ENCODE measurements at regions of chr18 and their contacts with region 1.

Region 1: GRCh38 chr18:48622911-48623431 is 84.1 kb downstream of the CTIF start:
- DNase-seq: peak; percentile 32
- H3K4me3 ChIP-seq: no peak overlapping the region
- CTCF ChIP-seq: no peak

Region 2: DNA sequence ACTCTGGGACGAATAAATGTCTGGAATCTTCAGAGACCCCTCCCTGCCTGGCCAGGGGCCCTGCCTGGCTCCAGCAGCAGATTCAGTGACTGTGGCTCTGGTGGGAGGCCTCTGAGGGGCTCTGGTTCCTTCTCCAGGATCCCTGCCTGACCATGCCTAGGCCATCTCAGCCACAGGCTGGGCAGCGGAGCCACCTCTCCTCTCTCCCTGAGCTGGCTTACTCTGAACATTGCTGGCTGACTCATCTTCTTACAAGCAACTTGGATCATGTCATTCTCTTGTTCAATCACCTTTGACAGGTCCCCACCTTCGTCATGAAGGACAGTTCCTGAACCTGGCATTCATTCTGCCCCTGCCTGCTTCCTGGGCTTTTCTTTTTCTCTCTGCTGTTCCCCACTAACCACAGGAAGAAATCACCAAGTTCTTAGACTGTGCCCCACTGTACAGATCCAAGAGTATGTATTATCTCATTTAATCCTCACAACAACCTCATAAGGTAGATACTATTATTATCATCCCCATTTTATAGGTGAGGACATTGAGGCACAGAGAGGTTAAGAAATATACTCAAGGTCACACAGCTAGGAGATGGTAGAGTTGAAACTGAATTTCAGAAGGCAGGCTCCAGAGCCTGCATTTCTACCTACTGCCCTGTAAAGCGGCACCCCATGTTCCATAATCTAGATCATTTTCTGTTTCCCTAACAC is 537.0 kb before region 1 on chr18:
- in situ Hi-C with region 1: no loop called
- DNase-seq: no peak
- H3K4me3 ChIP-seq: no peak overlapping the region
- CTCF ChIP-seq: no peak

Region 3: DNA sequence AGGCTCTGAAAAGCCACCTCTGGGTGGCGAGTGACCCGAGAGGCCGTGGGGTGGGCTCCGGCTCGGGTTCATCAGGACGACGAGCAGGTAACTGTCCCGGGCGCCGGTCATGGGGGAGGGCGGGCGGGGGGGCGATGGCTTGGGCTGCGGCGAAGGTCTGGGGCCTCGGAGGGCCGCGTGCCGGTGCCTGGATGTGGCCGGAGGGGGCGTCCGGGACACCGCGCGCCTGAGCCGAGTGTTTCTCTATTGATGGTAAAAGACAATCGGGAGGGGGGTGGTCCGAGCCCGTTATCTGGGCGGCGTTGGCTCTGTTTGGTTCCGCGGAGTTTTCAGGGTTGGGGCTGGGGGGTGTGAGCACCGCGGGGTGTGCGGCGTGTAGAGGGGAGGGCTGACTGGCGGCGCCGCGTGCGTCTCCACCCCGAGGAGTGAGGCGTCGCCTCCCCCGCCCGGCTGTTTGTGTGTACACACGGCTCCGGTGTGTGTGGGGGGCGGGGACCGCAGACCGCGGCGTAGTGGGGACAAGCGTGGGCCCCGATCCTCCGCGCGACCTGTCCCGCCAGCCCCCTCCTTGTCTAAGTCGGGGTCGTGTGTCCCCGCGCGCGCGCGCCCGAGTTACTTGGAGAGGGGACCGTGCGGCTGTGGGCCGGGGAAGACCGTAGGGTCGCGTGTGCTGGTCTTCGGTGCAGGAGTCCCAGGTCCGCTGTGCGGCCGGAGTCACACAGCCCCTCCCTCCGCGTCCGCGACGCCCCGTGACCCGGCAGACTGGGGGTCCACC is 82.5 kb before region 1 on chr18:
- in situ Hi-C with region 1: loop called (anchors 5 kb)
- DNase-seq: no peak
- H3K4me3 ChIP-seq: peak overlapping the region; percentile 95
- CTCF ChIP-seq: peak; percentile 25